Activated CD4-positive, alpha-beta T cell treated with anti-CD3 and anti-CD28 coated beads for 36 hours (primary cell): ENCODE measurements at regions of chr3 and their contacts with region 1.

Region 1: GRCh38 chr3:4978204-4978965 is 852 bp upstream of the BHLHE40 start:
- DNase-seq: peak; percentile 99
- ATAC-seq: peak; percentile 57
- H3K4me3 Mint-ChIP-seq: peak overlapping the region; percentile 93
- H3K27ac Mint-ChIP-seq: peak overlapping the region; percentile 98
- H3K4me1 Mint-ChIP-seq: peaks cover 39% of the 10 kb centered on the region
- H3K27me3 Mint-ChIP-seq: no peaks in the 10 kb centered on the region

Region 2: GRCh38 chr3:4493014-4493940 is 485.1 kb before region 1 on chr3 and contains the start of gene ITPR1:
- CTCF ChIA-PET with region 1: no interaction called
- POLR2A ChIA-PET with region 1: no interaction called
- intact Hi-C with region 1: loop called in 1 of 2 experiments (anchors 2 kb)
- DNase-seq: peak; percentile 99
- ATAC-seq: peak; percentile 95
- H3K4me3 Mint-ChIP-seq: peak within 1 kb of the TSS; percentile 77
- H3K27ac Mint-ChIP-seq: peak within 1 kb of the TSS; percentile 71
- H3K4me1 Mint-ChIP-seq: peaks cover 32% of the 10 kb centered on the region
- H3K27me3 Mint-ChIP-seq: peaks cover 8% of the 10 kb centered on the region
- total RNA-seq, gene ITPR1: 48.6 to 55.6 TPM

Region 3: GRCh38 chr3:4741404-4742307 is 236.7 kb before region 1 on chr3:
- CTCF ChIA-PET with region 1: interaction called, 4 read pairs
- POLR2A ChIA-PET with region 1: no interaction called
- intact Hi-C with region 1: loop called (anchors 1 to 5 kb)
- DNase-seq: peak; percentile 44
- ATAC-seq: peak; percentile 39
- H3K4me3 Mint-ChIP-seq: no peak overlapping the region
- H3K27ac Mint-ChIP-seq: peak overlapping the region; percentile 89
- H3K4me1 Mint-ChIP-seq: peaks cover 50% of the 10 kb centered on the region
- H3K27me3 Mint-ChIP-seq: no peaks in the 10 kb centered on the region

Region 4: DNA sequence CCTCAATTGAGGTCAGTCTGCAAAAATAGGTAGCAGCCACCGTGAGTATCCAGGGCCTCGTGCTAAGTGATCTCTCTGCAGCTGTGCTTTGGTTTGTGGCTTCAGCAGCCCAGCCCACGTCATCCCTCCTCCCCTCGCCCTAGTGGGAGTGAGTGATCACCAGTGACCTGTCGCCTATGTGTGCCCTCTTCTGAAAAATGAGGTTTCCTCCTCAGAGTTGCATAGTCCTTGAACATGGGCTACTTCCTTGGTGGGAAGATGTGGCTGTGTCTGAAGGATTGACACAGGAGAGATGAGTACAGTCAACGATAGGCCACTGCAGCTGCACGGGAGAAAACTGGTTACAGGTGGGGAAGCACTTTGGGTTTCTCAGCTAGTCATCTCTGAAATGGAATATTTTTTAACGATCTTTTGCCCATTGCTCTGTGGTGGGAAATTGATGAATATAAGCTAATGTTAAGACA is 143.9 kb before region 1 on chr3:
- CTCF ChIA-PET with region 1: interaction called, 10 read pairs
- POLR2A ChIA-PET with region 1: interaction called, 7 read pairs
- intact Hi-C with region 1: loop called (anchors 1 kb)
- DNase-seq: peak; percentile 84
- ATAC-seq: peak; percentile 31
- H3K4me3 Mint-ChIP-seq: peak overlapping the region; percentile 26
- H3K27ac Mint-ChIP-seq: peak overlapping the region; percentile 90
- H3K4me1 Mint-ChIP-seq: peaks cover 86% of the 10 kb centered on the region
- H3K27me3 Mint-ChIP-seq: no peaks in the 10 kb centered on the region

Region 5: DNA sequence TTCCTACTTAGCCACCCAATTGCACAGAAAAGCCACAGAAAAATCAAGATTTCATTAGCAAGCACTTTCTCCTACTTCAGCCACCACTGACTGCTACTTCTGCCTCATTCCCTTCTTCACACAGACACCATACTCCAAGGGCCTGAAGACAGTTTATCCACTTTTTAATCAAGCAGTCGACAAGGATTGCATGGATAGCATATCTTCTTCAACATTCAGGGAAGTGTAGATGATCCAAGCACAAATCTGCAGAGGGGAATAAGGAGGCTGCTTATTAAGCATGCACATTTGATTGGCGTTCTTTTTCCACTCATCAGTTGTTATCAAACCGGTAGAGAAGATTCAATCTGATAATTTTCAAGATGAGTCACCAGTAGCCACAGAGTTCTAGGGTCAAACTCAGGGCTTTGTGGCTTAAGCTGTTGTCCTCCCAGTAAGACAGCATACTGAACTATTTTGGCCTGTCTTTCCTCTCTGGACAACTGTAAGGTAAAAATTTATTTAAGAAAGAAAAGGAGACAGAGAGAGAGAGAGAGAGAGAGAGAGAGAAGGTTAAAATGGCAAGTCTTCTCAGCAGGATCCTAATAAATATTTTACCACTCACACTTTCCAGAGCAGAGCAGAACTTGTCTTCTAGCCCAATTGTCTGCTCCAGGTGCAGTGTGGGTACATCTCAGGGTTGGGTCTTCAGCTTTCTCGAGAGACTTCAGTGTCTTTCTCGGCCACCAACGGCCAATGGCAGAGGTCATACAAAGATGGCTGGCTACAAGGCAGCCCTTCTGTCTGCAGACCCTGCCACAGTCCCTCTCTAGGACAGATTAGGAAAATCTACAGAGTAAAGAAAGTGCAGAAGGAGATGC is 79.7 kb before region 1 on chr3:
- CTCF ChIA-PET with region 1: interaction called, 8 read pairs
- POLR2A ChIA-PET with region 1: no interaction called
- intact Hi-C with region 1: loop called in 1 of 2 experiments (anchors 2 kb)
- DNase-seq: no peak
- ATAC-seq: peak; percentile 80
- H3K4me3 Mint-ChIP-seq: peak overlapping the region; percentile 15
- H3K27ac Mint-ChIP-seq: peak overlapping the region; percentile 34
- H3K4me1 Mint-ChIP-seq: peaks cover 47% of the 10 kb centered on the region
- H3K27me3 Mint-ChIP-seq: no peaks in the 10 kb centered on the region

Region 6: GRCh38 chr3:5026331-5027218 is 48.2 kb after region 1 on chr3:
- CTCF ChIA-PET with region 1: interaction called, 76 read pairs
- POLR2A ChIA-PET with region 1: interaction called, 33 read pairs
- intact Hi-C with region 1: loop called (anchors 1 kb)
- DNase-seq: peak; percentile 88
- ATAC-seq: peak; percentile 37
- H3K4me3 Mint-ChIP-seq: peak overlapping the region; percentile 69
- H3K27ac Mint-ChIP-seq: peak overlapping the region; percentile 84
- H3K4me1 Mint-ChIP-seq: peaks cover 58% of the 10 kb centered on the region
- H3K27me3 Mint-ChIP-seq: peaks cover 6% of the 10 kb centered on the region

Region 7: GRCh38 chr3:5194341-5195159 is 216.2 kb after region 1 on chr3:
- CTCF ChIA-PET with region 1: interaction called, 6 read pairs
- POLR2A ChIA-PET with region 1: interaction called, 7 read pairs
- intact Hi-C with region 1: loop called (anchors 1 to 2 kb)
- DNase-seq: peak; percentile 62
- ATAC-seq: peak; percentile 34
- H3K4me3 Mint-ChIP-seq: peak overlapping the region; percentile 68
- H3K27ac Mint-ChIP-seq: peak overlapping the region; percentile 98
- H3K4me1 Mint-ChIP-seq: peaks cover 86% of the 10 kb centered on the region
- H3K27me3 Mint-ChIP-seq: no peaks in the 10 kb centered on the region